ENCODE measurements at regions of chr7 and their contacts with region 1.

Region 1: DNA sequence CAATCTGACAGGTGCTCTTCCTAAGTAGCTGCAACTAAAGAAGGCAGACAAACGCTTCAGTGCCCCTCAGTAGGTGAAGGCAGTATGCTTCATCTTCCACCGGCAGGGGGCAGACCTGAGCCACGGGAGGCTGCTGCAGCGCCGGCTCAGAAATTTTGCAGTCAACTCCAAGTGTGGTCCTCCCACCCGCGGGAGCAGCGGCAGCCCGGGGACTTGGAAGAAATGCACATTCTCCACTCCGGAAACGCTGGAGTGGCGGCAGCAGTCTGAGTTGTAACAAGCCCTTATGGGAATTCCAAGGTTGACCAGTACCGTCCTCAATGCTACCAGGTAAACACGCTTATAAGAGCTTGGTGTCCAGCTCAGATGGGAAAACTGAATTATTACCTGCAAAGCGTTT is 3.4 kb downstream of the IGFBP3 start:
- DNase-seq: peak; percentile 85

Region 2: DNA sequence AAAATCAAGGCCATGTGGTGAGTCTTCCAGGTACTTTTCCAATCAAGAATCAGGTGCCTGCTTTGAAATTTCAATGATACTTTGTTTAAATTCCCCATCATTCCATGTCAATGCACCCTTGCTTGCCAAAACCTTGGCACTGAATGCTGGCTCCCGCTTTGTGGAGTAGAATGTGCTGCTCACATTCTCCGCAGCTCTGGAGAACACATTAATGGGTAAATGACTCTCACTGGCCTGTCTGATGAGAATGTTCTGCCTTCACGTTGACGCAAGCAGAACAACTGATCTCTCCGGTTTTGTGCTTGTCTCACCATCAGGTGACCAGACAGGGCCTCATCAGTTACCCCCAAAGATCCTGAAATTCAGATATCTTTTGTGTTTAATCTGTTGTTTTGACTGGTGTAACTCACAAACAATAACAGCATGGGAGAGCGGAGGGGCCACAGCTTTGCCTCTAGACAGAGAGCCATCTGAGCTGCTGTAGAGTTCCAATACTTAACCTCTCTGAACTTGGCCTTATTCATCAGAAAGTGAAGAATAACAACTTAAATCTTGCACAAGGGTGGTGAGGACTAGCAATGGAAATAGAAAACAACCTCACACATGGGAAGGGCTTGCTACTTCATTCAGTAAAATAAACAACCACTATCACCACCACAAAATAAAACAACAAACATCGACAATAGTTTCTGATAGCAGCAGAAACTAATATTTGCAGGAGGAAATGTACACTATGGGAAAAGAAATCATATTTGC is 280.3 kb after region 1 on chr7:
- intact Hi-C with region 1: no loop called
- DNase-seq: no peak

Region 3: DNA sequence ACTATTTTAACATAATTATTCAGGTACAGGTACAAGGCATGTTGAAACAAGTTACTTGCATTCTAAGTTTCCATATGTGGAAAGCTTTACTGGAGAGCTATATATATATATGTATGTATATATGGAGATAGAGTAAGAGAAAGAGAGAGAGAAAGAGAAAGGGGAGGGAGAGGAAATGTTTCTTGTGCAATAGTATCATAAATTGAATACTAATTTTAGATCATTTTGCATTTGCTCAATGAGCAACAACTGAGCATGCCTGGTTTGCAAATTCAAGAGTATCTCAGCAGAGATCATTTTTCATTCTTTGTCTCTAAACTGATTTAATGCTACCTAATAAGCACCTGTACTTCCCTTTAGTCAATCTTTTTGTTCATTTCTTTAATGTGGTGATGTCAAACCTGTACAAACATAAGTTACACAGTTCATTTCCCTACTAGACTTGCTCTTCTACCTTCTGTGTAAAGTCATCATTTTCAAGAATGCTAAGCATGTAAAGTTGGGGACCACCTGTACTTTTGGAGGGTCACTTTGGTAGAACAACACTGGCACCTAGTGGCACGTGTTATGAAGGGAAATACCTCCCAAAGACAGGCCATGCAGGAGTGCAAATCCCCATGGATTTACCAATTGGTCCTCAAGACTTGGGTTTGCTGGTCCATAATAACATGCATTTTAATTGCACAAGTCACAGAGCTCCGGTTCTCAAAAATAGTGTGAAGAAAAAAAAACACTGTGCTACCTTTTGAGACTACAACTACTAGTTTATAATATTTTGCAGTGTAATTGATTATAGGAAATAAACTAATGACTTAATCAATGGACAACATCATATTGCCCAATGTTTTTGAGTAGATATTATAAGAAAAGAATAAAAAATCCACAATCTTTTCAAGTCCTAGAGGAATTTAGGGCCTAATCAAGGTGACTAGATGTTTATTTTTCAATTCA is 434.6 kb after region 1 on chr7:
- intact Hi-C with region 1: loop called (anchors 2 kb)
- DNase-seq: no peak

Region 4: GRCh38 chr7:47232751-47233412 is 1315.2 kb after region 1 on chr7:
- intact Hi-C with region 1: loop called (anchors 5 kb)
- DNase-seq: no peak

Region 5: DNA sequence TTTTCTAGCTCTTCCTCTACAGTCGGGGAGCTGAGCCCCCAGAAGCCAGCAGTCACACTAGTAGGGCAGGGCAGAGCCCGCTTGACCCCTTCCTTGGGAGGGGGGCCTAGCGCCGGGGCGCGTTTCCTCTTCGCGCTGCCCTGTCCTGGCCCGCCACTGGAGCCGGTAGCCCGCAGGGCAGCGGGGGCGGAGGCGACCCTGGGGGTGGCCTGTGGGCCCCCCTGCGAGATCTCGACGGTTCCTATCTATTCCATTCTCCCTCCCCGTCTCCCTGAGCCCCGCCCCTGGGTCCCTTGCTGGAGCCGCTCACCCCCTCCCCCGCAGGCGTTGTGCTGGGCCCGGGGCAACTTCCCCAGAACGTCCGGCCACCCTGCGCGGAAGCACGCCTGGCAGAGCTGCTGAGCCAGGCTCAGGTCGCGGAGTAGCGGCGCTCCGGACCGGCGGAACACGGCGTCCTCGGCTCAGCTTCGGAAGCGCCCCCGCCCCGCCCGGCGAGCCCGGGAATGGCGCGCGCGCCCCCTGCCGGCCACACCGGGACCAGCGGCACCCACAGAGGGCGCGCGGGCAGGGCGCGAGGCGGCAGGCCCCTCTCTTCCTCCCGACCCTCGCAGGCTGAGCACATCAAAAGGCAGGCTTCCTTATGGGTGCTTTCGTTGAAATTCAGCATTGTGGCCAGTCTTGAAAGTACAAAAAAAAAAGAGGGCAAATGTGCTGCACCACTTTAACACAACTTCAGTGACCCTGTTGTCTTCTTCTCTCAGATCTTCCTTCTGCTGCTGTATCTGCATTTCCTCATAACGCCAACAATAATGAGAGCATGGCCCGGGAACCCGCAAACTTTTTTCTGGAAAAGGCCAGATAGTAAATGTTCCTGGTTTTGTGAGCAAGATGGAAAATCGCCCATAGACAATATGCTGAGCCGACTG is 1336.7 kb after region 1 on chr7:
- intact Hi-C with region 1: loop called (anchors 5 kb)
- DNase-seq: peak; percentile 89